ENCODE measurements at regions of chr12 and their contacts with region 1.

Region 1: DNA sequence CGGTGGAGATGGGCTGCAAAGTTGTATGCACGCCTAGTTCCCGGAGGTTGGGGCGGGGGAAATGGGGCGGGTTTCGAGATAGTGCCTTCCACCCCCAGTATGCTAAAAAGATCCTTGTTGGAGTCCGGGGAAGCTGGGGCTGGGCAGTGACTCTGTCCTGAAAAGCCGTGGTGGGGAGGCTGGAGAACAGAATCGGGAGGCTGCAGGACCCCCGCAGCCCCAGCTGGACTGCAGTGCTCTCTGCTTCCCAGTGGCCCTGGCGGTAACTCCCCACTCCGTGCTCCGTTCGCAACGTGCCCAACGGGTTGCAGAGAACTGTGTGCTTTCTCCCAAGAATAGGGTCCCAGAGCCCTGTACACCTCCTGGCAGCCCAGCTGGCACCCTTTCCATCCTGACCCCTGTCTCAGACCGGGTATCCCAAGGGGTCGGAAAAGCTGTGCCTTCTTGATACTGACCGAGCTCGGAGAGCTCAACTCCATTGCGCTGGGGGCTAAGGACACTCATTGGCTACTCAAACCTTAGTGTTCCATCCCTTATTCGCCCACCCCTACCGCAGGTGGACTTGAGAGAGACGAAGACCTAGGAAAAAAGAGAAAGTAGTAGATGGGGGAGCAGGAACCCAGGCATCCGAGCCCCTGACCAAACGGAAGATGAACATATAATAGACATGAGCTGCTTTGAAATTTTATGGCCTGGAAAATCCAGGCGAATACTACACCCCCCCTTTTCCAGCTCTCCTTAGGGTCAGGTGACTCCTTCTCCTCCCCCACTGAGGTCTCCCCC is 1.2 kb downstream of the GDF11 start:
- DNase-seq: no peak
- H3K27ac ChIP-seq: peak overlapping the region; percentile 83
- CTCF ChIP-seq: no peak

Region 2: GRCh38 chr12:54993161-54993835 is 750.8 kb before region 1 on chr12:
- CTCF ChIA-PET with region 1: no interaction called
- POLR2A ChIA-PET with region 1: no interaction called
- DNase-seq: peak; percentile 60
- H3K27ac ChIP-seq: no peak overlapping the region
- CTCF ChIP-seq: peak; percentile 84

Region 3: DNA sequence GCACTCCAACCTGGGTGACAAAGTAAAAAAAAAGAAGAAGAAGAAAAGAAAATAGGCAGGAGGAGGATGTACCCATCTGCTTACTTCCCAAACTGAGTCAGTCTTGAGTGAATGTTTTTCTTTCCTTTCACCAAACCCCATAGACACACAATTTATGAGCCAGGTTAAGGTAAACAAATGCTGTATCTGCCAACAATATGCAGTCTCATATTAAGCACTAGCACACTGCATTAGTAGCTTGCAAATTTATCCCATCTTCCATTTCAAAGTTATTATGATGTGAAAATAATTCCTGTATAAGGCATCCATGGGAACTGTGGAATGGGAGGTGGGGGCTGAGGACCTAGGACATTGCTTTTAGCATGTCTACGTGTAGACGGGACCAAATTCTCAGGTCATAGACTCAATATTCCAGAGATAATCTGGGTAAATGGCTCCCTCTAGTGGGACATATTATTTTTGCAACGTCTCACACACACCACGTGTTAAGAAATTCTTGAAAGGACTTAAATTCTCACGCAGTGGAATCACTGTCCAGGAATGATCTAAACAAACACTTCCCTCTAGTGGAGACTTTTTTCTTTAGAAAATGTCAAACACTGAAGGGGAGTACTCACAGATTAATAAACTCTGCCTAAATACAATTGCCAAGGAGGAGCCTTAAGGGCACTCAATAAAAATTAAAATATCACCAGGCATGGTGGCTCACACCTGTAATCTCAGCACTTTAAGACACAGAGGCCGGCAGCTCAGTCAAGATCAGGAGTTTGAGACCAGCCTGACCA is 124.6 kb before region 1 on chr12:
- CTCF ChIA-PET with region 1: no interaction called
- POLR2A ChIA-PET with region 1: no interaction called
- DNase-seq: peak; percentile 89
- H3K27ac ChIP-seq: no peak overlapping the region
- CTCF ChIP-seq: peak; percentile 86

Region 4: GRCh38 chr12:55760663-55761062 is 16.5 kb after region 1 on chr12:
- CTCF ChIA-PET with region 1: interaction called, 7 read pairs
- POLR2A ChIA-PET with region 1: interaction called, 19 read pairs
- DNase-seq: no peak
- H3K27ac ChIP-seq: no peak overlapping the region
- CTCF ChIP-seq: no peak

Measured in RWPE1 (cell line).